Left lung (tissue), 14 donors: ENCODE measurements at regions of chr9 and their contacts with region 1.

Region 1: DNA sequence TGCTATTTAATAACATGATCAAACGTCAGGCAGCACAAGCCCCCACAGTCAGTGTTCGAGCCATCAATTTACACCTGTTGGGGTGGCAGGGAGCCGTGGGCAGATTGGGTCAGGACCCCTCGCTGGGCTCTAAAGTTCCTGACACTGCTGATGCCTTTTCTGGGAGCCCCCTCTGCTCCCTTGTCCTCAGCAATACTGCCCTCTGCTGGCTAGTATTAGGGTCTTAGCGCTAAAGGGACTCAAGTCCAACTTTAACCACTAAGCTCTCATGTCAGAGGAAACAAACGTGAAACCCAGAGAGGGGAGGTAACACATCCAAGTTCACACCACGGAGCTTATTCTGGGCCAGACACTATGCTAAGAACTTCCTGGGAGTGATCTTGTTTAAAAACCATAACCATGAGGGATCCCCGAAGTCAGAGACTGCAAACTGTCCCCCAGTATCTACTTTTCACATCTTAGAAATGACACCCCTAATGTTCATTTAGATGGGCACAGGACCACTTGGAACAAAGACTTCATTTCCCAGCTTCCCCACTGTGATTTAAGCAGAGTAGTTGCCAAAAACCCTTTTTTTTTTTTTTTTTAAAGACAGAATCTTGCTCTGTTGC is 20.4 kb downstream of the ANKS6 start:
- DNase-seq: peak in 2 of 4 donors; percentile 34 to 67
- ATAC-seq: peak; percentile 44
- H3K4me3 ChIP-seq: no peak overlapping the region
- H3K27ac ChIP-seq: no peak overlapping the region
- H3K4me1 ChIP-seq: no peaks in the 10 kb centered on the region
- H3K27me3 ChIP-seq: no peaks in the 10 kb centered on the region
- CTCF ChIP-seq: peak; percentile 43 to 56

Region 2: DNA sequence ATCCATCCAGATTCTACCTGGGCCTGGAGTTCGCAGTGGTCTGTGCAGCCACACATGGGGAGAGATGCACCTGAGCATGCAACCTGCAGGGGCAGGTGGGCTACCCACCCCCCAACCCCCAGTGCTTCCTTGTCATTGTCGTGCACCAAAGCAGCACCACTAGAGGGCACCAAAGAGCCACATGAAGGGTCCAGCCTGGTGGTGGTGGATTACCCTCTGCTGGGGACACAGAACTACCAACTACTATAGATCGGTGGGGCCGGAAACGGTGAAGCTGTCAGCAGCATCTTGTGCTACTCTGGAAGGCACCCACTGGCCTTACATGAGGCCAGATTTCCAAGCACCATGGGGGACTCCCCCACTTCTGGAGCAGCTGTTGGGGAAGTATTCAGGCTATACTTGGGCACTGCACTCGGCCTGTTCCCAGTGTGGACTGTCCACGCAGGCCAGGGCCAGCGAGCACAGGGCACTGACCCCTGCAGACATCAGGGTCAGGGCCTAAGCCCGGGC is 460.3 kb before region 1 on chr9:
- intact Hi-C with region 1: loop called in 1 of 2 experiments (anchors 10 kb)
- DNase-seq: peak in 3 of 4 donors; percentile 70 to 83 (median 74)
- ATAC-seq: peak; percentile 92
- H3K4me3 ChIP-seq: no peak overlapping the region
- H3K27ac ChIP-seq: no peak overlapping the region
- H3K4me1 ChIP-seq: peaks cover 0 to 20% of the 10 kb centered on the region in 2 donors
- H3K27me3 ChIP-seq: no peaks in the 10 kb centered on the region
- CTCF ChIP-seq: peak; percentile 79 to 87